ENCODE measurements at regions of chr13 and their contacts with region 1.

Region 1: DNA sequence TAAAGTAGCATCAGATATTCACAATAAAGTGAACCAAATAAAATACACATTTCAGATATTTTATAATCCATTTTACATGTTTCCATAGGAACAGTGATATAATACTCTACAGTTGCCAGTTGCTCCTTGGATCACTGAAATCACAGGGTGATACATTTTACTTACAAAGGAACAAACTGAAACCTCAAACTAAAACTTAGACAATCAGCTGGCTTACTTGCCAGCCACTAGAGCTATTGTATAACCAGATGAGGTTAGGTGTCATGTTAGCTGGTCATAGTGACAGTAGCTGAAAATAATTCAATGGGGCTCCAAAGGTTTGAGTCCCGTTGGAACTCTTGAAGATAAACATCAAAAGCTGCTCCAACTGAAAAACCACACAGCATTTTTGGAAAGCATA is 274.6 kb downstream of the ITGBL1 start:
- DNase-seq: no peak
- ATAC-seq: no peak
- H3K4me3 ChIP-seq: no peak overlapping the region
- H3K27ac ChIP-seq: no peak overlapping the region
- H3K4me1 ChIP-seq: no peaks in the 10 kb centered on the region
- H3K27me3 ChIP-seq: no peaks in the 10 kb centered on the region

Region 2: DNA sequence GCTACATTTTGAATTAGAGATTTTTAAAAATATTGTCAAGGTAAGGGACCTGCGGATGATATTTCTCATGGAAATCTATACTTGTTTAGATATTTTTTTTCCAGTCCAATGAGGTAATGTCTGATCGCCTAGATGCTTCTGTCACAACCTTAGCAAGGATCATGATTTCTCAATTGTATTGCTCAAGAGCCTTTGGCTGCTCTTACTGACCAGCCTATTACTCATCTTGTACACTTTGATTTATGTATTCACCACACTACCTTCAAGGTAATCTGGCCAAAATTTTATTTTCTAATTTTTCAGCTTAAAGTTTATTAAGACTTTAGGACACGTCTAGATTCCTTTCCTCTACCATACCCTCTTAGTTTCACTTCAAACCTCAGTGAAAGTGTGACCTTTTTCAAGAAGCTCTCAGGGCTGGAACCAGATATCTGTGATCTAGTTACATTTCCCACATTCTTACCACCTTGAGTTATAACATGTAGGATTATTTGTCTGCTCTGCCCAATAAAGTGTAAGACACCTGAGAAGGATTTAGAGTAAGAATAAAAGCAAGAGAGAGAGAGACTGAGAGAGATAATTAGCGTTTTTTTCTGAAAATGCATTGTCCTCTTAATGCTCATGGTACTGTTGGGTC is 77.5 kb before region 1 on chr13:
- intact Hi-C with region 1: loop called in 1 of 2 experiments (anchors 10 kb)
- DNase-seq: no peak
- ATAC-seq: peak; percentile 80
- H3K4me3 ChIP-seq: no peak overlapping the region
- H3K27ac ChIP-seq: no peak overlapping the region
- H3K4me1 ChIP-seq: peaks cover 0 to 3% of the 10 kb centered on the region in 2 donors
- H3K27me3 ChIP-seq: no peaks in the 10 kb centered on the region

Region 3: GRCh38 chr13:101795025-101795424 is 67.9 kb after region 1 on chr13:
- intact Hi-C with region 1: no loop called
- DNase-seq: no peak
- ATAC-seq: no peak
- H3K4me3 ChIP-seq: no peak overlapping the region
- H3K27ac ChIP-seq: no peak overlapping the region
- H3K4me1 ChIP-seq: no peaks in the 10 kb centered on the region
- H3K27me3 ChIP-seq: no peaks in the 10 kb centered on the region

Measured in aorta (tissue), 5 donors.